Pancreas (tissue), 10 donors: ENCODE measurements at regions of chr10 and their contacts with region 1.

Region 1: GRCh38 chr10:123132576-123133477 is 2.9 kb upstream of the HMX3 start:
- DNase-seq: peak; percentile 69 to 94 (median 86)
- ATAC-seq: peak; percentile 79 to 95 (median 93)
- H3K4me3 ChIP-seq: peak overlapping the region in 1 of 4 donors; percentile 29
- H3K27ac ChIP-seq: no peak overlapping the region
- H3K4me1 ChIP-seq: peaks cover 0 to 25% (median 11%) of the 10 kb centered on the region in 3 donors
- H3K27me3 ChIP-seq: peaks cover 0 to 56% (median 31%) of the 10 kb centered on the region in 4 donors
- CTCF ChIP-seq: peak; percentile 77 to 92 (median 86)

Region 2: GRCh38 chr10:123380497-123381085 is 247.8 kb after region 1 on chr10:
- intact Hi-C with region 1: loop called in 1 of 3 experiments (anchors 10 kb)
- DNase-seq: no peak
- ATAC-seq: peak in 2 of 4 donors; percentile 34 to 44
- H3K4me3 ChIP-seq: no peak overlapping the region
- H3K27ac ChIP-seq: no peak overlapping the region
- H3K4me1 ChIP-seq: peaks cover 0 to 4% (median 0%) of the 10 kb centered on the region in 3 donors
- H3K27me3 ChIP-seq: no peaks in the 10 kb centered on the region
- CTCF ChIP-seq: no peak

Region 3: GRCh38 chr10:123559066-123559822 is 426.4 kb after region 1 on chr10:
- intact Hi-C with region 1: loop called (anchors 5 to 10 kb)
- DNase-seq: peak; percentile 31 to 91 (median 78)
- ATAC-seq: peak; percentile 80 to 99 (median 96)
- H3K4me3 ChIP-seq: no peak overlapping the region
- H3K27ac ChIP-seq: no peak overlapping the region
- H3K4me1 ChIP-seq: no peaks in the 10 kb centered on the region
- H3K27me3 ChIP-seq: no peaks in the 10 kb centered on the region
- CTCF ChIP-seq: peak; percentile 95 to 99 (median 98)